ENCODE measurements at regions of chr5 and their contacts with region 1.

Region 1: GRCh38 chr5:158875272-158875679 is 224.4 kb downstream of the EBF1 start:
- DNase-seq: no peak
- ATAC-seq: no peak

Region 2: DNA sequence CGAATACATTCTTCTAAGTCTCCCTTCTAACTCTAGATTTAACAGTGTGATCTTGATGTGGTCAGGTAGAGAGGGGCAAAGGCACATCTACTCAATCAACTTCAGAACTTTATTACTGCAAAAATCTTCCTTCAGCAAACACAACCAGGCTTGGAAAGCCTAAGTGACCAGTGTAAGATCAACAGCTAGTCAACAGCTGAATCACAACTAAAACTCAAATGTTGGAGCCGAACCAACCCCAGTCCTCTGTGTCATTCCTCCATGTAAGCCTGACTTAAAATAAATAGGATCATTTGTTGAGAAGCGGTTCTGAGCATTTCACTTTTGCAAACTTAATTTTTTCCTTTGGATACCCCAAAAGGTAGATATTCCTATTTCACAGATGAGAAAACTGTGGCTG is 128.3 kb before region 1 on chr5:
- intact Hi-C with region 1: no loop called
- DNase-seq: no peak
- ATAC-seq: no peak

Region 3: DNA sequence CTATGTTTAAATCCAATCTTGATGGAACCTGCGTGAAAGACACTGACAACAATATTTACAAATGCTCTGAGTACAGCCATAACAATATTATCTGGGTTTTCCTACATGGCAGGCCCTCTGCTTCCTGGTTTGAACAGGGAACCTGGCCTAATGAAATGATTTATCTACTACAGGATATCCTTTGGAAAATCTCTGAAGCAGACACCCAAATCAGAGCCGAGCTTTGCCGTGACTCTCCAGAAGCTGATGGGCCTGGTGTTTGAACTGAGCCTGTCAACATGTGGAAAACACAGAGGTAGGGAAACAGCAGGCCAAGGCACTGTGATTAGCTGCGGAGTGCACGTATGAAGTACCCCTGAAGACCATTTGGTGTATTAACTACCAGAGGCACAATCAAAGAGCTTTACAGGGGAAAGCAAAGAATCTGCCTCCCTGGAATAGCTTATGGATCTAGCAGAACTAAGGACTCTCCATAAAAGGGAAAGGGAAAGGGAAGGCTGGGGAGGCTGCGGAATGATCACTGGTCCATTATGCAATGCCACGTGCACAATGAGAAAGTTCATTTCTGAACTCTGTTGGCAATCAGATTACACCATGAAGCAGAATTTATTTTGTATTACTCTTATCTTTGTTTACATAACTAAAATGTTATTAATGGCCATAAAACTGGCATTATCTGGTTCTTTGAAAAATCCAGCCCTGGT is 97.5 kb before region 1 on chr5:
- intact Hi-C with region 1: loop called (anchors 5 kb)
- DNase-seq: no peak
- ATAC-seq: no peak